Activated CD4-positive, alpha-beta memory T cell treated with anti-CD3 and anti-CD28 coated beads for 36 hours (primary cell): ENCODE measurements at regions of chr20 and their contacts with region 1.

Region 1: GRCh38 chr20:44080646-44081267 is 106.2 kb downstream of the JPH2 start:
- DNase-seq: peak; percentile 85
- H3K4me3 Mint-ChIP-seq: no peak overlapping the region
- H3K27ac Mint-ChIP-seq: no peak overlapping the region
- H3K4me1 Mint-ChIP-seq: peaks cover 8% of the 10 kb centered on the region
- H3K27me3 Mint-ChIP-seq: no peaks in the 10 kb centered on the region

Region 2: DNA sequence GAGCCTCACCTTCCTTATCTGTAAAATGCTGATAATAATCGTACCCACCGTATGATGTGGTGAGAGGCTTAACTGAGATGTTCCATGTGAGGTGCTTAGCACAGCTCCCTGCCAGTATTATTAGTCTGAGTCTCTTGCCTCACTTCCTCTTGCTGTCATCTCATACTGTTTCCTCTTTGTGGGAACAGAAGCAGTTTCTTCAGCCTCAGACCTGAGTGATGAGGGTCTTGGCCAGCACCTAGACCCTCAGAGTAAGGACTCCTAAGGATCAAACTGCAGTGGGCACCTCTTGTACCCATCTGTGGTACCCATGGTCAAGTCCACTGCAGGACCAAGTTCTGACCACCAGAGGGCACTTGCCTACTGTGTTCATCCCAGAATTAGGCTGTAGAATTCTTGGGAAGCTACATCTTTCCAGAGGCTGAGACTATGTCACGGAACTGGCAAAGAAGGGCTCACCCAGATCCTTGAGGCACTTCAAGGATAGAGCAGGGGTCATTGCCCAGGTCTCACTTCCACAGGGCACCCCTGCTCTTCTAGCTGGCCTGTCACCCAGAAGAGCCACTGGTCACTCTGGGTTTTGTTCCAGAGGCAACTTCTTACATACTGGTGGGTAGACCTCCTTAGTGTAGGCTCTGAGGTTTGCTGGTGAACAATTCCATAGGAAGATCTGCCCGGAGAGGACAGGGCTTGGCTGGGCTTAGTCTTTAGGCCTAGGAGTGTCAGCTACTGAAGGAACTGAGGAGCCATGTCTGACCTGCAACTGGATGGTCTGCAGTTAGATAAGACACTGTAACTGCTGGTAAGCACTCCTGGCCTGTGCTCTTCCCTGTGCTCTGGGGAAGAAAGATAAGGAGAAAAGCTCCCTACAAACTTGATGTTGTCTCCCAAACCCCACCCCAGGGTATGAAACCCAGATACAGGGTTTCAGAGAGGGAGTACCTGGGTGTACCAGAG is 542.6 kb before region 1 on chr20:
- CTCF ChIA-PET with region 1: interaction called, 8 read pairs
- POLR2A ChIA-PET with region 1: no interaction called
- intact Hi-C with region 1: loop called (anchors 2 kb)
- DNase-seq: peak; percentile 54
- H3K4me3 Mint-ChIP-seq: no peak overlapping the region
- H3K27ac Mint-ChIP-seq: no peak overlapping the region
- H3K4me1 Mint-ChIP-seq: no peaks in the 10 kb centered on the region
- H3K27me3 Mint-ChIP-seq: no peaks in the 10 kb centered on the region

Region 3: GRCh38 chr20:43824309-43825050 is 256.3 kb before region 1 on chr20:
- CTCF ChIA-PET with region 1: no interaction called
- POLR2A ChIA-PET with region 1: no interaction called
- intact Hi-C with region 1: loop called (anchors 1 kb)
- DNase-seq: no peak
- H3K4me3 Mint-ChIP-seq: no peak overlapping the region
- H3K27ac Mint-ChIP-seq: no peak overlapping the region
- H3K4me1 Mint-ChIP-seq: peaks cover 10% of the 10 kb centered on the region
- H3K27me3 Mint-ChIP-seq: peaks cover 10% of the 10 kb centered on the region

Region 4: GRCh38 chr20:43840382-43841070 is 240.2 kb before region 1 on chr20:
- CTCF ChIA-PET with region 1: interaction called, 3 read pairs
- POLR2A ChIA-PET with region 1: no interaction called
- intact Hi-C with region 1: loop called (anchors 2 kb)
- DNase-seq: peak; percentile 64
- H3K4me3 Mint-ChIP-seq: no peak overlapping the region
- H3K27ac Mint-ChIP-seq: no peak overlapping the region
- H3K4me1 Mint-ChIP-seq: peaks cover 31% of the 10 kb centered on the region
- H3K27me3 Mint-ChIP-seq: peaks cover 20% of the 10 kb centered on the region

Region 5: GRCh38 chr20:43949741-43950618 is 130.8 kb before region 1 on chr20:
- CTCF ChIA-PET with region 1: no interaction called
- POLR2A ChIA-PET with region 1: no interaction called
- intact Hi-C with region 1: no loop called
- DNase-seq: peak; percentile 88
- H3K4me3 Mint-ChIP-seq: peak overlapping the region; percentile 11
- H3K27ac Mint-ChIP-seq: peak overlapping the region; percentile 50
- H3K4me1 Mint-ChIP-seq: peaks cover 60% of the 10 kb centered on the region
- H3K27me3 Mint-ChIP-seq: peaks cover 31% of the 10 kb centered on the region

Region 6: DNA sequence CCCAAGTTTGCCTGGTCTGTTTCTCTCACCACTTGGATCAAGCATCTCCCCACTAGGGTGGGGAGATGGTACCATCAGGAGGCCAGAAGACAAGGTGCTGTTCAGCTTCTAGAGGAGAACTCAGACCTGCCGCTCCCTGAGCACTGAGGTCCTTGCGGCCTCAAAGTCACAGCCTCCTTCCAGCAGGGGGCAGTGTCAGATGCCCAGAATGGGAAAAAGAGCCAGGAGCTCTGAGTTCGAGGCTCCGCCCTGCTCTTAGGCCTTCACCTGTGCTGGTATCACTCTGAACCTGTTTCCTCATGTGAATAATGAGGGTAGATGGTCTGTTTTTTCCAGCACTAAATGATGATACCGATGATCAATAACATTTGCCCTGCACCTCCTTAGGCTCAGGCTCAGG is 97.4 kb before region 1 on chr20:
- CTCF ChIA-PET with region 1: interaction called, 29 read pairs
- POLR2A ChIA-PET with region 1: no interaction called
- intact Hi-C with region 1: loop called (anchors 1 kb)
- DNase-seq: peak; percentile 68
- H3K4me3 Mint-ChIP-seq: no peak overlapping the region
- H3K27ac Mint-ChIP-seq: no peak overlapping the region
- H3K4me1 Mint-ChIP-seq: peaks cover 14% of the 10 kb centered on the region
- H3K27me3 Mint-ChIP-seq: peaks cover 2% of the 10 kb centered on the region

Region 7: GRCh38 chr20:44038681-44039123 is 42.1 kb before region 1 on chr20:
- CTCF ChIA-PET with region 1: no interaction called
- POLR2A ChIA-PET with region 1: no interaction called
- intact Hi-C with region 1: no loop called
- DNase-seq: no peak
- H3K4me3 Mint-ChIP-seq: no peak overlapping the region
- H3K27ac Mint-ChIP-seq: no peak overlapping the region
- H3K4me1 Mint-ChIP-seq: peaks cover 3% of the 10 kb centered on the region
- H3K27me3 Mint-ChIP-seq: peaks cover 4% of the 10 kb centered on the region

Region 8: DNA sequence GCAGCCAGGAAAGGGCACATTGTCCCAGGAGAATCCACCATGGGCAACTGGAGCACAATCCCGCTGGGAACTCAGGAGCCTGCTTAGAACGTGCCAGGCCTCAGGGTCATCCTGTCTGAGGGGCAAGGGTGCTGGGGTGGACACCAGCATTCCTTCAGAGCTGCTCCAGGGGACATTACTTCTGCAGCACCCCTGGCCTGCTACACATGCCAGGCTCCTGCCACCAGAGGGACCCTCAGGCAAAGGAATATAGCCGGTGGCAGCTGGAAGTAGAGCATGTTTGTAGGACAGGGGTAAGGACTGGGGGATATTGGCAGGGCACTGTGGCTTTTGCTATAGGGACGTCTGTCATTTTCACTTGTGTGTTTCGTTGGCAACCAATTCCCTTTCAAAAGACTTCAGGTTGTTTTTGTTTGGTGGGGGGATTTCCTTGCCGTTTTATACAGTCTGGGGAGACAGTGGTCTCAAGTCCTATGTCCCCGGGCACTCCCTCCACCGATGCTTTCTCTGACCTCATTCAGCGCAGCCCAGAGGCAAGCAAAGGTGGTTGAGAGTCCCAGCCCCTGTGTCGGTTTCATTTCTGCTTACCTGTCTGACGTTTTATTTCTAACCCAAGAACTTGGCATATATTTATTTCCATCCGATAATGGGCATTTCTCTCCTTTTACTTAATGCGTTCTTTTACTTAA is 24.6 kb before region 1 on chr20:
- CTCF ChIA-PET with region 1: interaction called, 23 read pairs
- POLR2A ChIA-PET with region 1: no interaction called
- intact Hi-C with region 1: loop called (anchors 1 kb)
- DNase-seq: peak; percentile 58
- H3K4me3 Mint-ChIP-seq: no peak overlapping the region
- H3K27ac Mint-ChIP-seq: no peak overlapping the region
- H3K4me1 Mint-ChIP-seq: peaks cover 7% of the 10 kb centered on the region
- H3K27me3 Mint-ChIP-seq: no peaks in the 10 kb centered on the region

Region 9: GRCh38 chr20:44104798-44105517 is 24.2 kb after region 1 on chr20:
- CTCF ChIA-PET with region 1: no interaction called
- POLR2A ChIA-PET with region 1: no interaction called
- intact Hi-C with region 1: no loop called
- DNase-seq: no peak
- H3K4me3 Mint-ChIP-seq: no peak overlapping the region
- H3K27ac Mint-ChIP-seq: no peak overlapping the region
- H3K4me1 Mint-ChIP-seq: no peaks in the 10 kb centered on the region
- H3K27me3 Mint-ChIP-seq: peaks cover 57% of the 10 kb centered on the region

Region 10: GRCh38 chr20:44422083-44422482 is 341.3 kb after region 1 on chr20:
- CTCF ChIA-PET with region 1: no interaction called
- POLR2A ChIA-PET with region 1: no interaction called
- intact Hi-C with region 1: no loop called
- DNase-seq: no peak
- H3K4me3 Mint-ChIP-seq: no peak overlapping the region
- H3K27ac Mint-ChIP-seq: no peak overlapping the region
- H3K4me1 Mint-ChIP-seq: no peaks in the 10 kb centered on the region
- H3K27me3 Mint-ChIP-seq: peaks cover 2% of the 10 kb centered on the region